ENCODE measurements at regions of chr4 and their contacts with region 1.

Region 1: GRCh38 chr4:9898596-9899305 is 117.3 kb downstream of the DRD5 start:
- DNase-seq: no peak
- H3K4me3 Mint-ChIP-seq: no peak overlapping the region
- H3K27ac Mint-ChIP-seq: no peak overlapping the region
- H3K4me1 Mint-ChIP-seq: no peaks in the 10 kb centered on the region
- H3K27me3 Mint-ChIP-seq: peaks cover 19% of the 10 kb centered on the region

Region 2: DNA sequence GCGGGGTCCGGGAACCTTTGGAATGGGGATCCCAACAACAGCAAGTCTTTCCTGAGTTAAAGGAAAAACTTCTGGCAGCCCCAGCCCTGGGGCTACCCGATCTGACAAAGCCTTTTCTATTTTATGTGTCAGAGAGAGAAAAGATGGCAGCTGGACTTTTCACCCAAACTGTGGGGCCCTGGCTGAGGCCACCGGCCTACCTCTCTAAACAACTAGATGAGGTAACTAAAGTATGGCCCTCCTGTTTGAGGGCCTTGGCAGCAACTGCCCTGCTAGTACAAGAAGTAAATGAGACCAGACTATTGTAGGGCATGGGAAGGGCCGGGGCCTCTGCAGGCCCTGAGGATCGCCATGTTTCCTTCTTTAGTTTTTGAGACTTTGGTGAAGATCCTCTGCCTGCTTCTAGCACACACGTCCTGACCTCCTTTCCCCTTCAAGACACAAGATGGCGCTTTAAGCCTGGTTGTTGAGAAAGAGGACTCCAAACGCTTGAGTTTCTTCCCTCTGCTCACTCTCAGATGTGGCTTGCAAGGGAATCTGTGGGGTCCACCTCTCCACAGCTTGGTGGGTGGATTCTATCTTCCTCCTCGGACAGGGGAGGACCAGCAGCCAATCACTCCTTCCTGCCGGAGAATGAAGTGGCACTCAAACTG is 135.8 kb before region 1 on chr4:
- CTCF ChIA-PET with region 1: interaction called, 10 read pairs
- POLR2A ChIA-PET with region 1: no interaction called
- DNase-seq: peak; percentile 50
- H3K4me3 Mint-ChIP-seq: no peak overlapping the region
- H3K27ac Mint-ChIP-seq: no peak overlapping the region
- H3K4me1 Mint-ChIP-seq: no peaks in the 10 kb centered on the region
- H3K27me3 Mint-ChIP-seq: peaks cover 15% of the 10 kb centered on the region

Region 3: GRCh38 chr4:10023806-10024205 is 125.1 kb after region 1 on chr4:
- CTCF ChIA-PET with region 1: no interaction called
- POLR2A ChIA-PET with region 1: no interaction called
- DNase-seq: no peak
- H3K4me3 Mint-ChIP-seq: no peak overlapping the region
- H3K27ac Mint-ChIP-seq: no peak overlapping the region
- H3K4me1 Mint-ChIP-seq: peaks cover 10% of the 10 kb centered on the region
- H3K27me3 Mint-ChIP-seq: peaks cover 11% of the 10 kb centered on the region